ENCODE measurements at regions of chr6 and their contacts with region 1.

Region 1: DNA sequence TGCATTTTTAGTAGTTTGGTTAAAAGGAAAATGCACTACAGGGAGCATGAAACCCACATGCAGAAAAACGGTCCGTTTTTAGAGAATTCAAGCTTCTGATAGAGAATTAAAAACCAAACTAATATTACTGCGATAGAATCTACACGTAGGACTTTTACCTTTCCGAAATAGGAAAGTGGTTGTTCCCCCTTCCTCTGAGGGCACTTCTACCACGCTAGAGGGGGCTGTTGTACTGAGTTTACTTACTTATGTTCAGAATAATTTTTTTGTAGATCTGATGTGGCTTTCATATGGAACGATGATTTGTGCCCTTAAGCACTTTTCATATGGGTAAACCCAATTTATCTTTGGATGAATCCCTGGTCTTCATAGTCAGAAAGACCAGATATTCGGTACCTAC is 264.3 kb upstream of the PLN start:
- DNase-seq: no peak
- ATAC-seq: peak; percentile 72

Region 2: DNA sequence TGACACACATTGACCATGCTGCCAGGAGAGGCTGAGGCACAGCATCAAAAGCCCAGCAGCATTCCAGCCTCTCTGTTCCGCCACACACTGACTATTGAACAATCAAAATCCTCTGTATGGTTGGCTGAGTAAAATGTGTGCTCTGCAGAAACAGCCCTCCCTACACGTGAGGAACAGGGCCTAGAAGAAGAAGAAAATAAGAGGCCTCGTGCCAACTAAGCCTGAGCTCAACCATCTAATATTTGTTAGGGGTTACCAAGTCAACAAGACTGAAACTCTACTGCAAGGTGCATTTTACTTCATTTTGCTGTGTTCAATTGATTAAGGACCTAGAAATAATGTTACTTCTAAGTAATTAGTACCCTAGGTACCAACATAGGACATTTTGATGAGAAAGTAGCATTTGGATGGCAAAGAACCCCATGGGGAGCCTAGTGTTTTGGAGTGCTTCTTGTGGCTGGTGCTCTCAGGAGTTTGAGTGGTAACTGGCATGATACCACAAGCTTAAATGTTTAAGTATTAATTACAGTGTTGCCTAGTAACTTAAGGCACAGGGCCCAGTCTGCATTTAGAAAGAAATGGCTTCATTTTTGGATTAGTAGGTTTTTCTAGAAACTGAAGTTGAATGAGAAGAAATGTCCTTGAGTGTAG is 117.7 kb after region 1 on chr6:
- intact Hi-C with region 1: no loop called
- DNase-seq: no peak
- ATAC-seq: peak; percentile 61

Region 3: GRCh38 chr6:118509009-118509617 is 225.3 kb after region 1 on chr6:
- intact Hi-C with region 1: loop called (anchors 5 kb)
- DNase-seq: no peak
- ATAC-seq: no peak

Region 4: DNA sequence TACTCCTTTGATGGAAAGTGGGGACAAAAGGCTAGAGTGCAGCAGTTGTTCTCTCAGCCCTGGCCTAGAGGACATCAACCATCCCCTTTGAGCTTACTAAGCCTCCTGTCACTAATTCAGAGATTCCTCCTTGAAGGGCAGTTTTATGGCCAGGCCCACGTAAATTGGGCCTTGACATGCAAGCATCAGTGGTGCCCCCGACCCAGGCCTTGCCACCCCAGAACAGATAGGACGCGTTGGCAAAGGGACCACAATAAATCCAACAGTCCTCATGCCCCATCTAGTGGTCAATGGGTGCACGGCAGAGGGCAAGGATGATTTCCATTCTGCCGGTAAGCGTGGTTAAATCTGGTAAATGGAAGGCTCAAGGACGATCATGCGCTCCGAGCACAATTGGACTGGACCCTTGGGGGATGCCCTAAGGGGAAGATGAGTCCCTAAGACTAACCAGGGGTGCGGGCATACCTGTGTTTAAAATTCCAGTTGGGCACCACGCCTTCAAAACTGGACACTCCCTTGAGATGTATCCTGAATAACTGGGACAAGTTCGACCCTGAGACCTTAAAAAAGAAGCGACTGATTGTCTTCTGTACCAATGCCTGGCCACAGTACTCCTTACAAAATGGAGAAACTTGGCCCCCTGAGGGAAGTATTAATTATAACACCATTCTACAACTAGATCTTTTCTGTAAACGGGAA is 335.1 kb after region 1 on chr6:
- intact Hi-C with region 1: loop called (anchors 10 kb)
- DNase-seq: peak; percentile 62
- ATAC-seq: peak; percentile 93